GM12878 (cell line): ENCODE measurements at regions of chr1 and their contacts with region 1.

Region 1: GRCh38 chr1:169893494-169894362 is at the start of gene SCYL3:
- DNase-seq: peak; percentile 98
- ATAC-seq: peak; percentile 86
- H3K4me3 ChIP-seq: peak within 1 kb of the TSS; percentile 93
- H3K27ac ChIP-seq: peak within 1 kb of the TSS; percentile 99
- H3K4me1 ChIP-seq: peaks cover 23% of the 10 kb centered on the region
- H3K27me3 ChIP-seq: no peaks in the 10 kb centered on the region
- CTCF ChIP-seq: no peak
- EP300 ChIP-seq: peak; percentile 5 to 39; a peak in 1 of 4 replicates
- POLR2A ChIP-seq: peak; percentile 93
- RAD21 ChIP-seq: no peak
- polyA plus RNA-seq, gene SCYL3: 4.3 to 5.6 TPM

Region 2: GRCh38 chr1:169694304-169695075 is 199.2 kb before region 1 on chr1:
- CTCF ChIA-PET with region 1: no interaction called
- POLR2A ChIA-PET with region 1: no interaction called
- RAD21 ChIA-PET with region 1: no interaction called
- SMC1A ChIA-PET with region 1: interaction called, 3 read pairs
- in situ Hi-C with region 1: no loop called
- intact Hi-C with region 1: loop called (anchors 10 kb)
- DNase-seq: no peak
- ATAC-seq: peak; percentile 51
- H3K4me3 ChIP-seq: no peak overlapping the region
- H3K27ac ChIP-seq: peak overlapping the region; percentile 67; the same call in 1 of the 2 replicates
- H3K4me1 ChIP-seq: peaks cover 80% of the 10 kb centered on the region
- H3K27me3 ChIP-seq: no peaks in the 10 kb centered on the region
- CTCF ChIP-seq: peak in 2 of 3 experiments; percentile 10 to 26; a peak in 2 of 6 replicates
- EP300 ChIP-seq: no peak
- POLR2A ChIP-seq: no peak
- RAD21 ChIP-seq: peak; percentile 42; the same call in 1 of the 2 replicates

Region 3: DNA sequence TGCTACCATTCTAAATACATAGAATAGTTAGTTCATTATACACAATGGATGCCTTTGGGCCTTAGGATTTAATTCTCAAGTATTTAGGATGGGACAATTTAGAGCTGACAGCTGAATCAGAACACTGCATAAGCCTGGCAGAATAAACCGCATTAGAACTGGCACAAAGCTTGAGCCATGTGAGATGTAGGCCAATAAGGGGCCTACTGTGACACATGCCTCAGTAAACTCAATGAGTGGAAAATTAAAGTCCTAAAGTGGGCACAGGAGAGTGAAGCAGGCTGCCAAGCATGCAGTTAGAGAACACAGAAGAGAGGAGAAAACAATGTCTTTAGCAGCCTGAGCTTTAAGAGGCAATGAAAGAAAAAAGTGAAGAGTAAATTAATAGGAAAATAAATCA is 24.3 kb before region 1 on chr1:
- CTCF ChIA-PET with region 1: no interaction called
- POLR2A ChIA-PET with region 1: interaction called, 3 read pairs
- RAD21 ChIA-PET with region 1: no interaction called
- SMC1A ChIA-PET with region 1: interaction called, 13 read pairs
- in situ Hi-C with region 1: no loop called
- intact Hi-C with region 1: no loop called
- DNase-seq: no peak
- ATAC-seq: no peak
- H3K4me3 ChIP-seq: no peak overlapping the region
- H3K27ac ChIP-seq: no peak overlapping the region
- H3K4me1 ChIP-seq: no peaks in the 10 kb centered on the region
- H3K27me3 ChIP-seq: no peaks in the 10 kb centered on the region
- CTCF ChIP-seq: no peak
- EP300 ChIP-seq: no peak
- POLR2A ChIP-seq: no peak
- RAD21 ChIP-seq: no peak

Region 4: GRCh38 chr1:169906938-169907337 is 13.2 kb after region 1 on chr1:
- CTCF ChIA-PET with region 1: interaction called, 6 read pairs
- POLR2A ChIA-PET with region 1: interaction called, 131 read pairs
- RAD21 ChIA-PET with region 1: interaction called, 24 read pairs
- SMC1A ChIA-PET with region 1: interaction called, 65 read pairs
- in situ Hi-C with region 1: no loop called
- intact Hi-C with region 1: no loop called
- DNase-seq: no peak
- ATAC-seq: no peak
- H3K4me3 ChIP-seq: no peak overlapping the region
- H3K27ac ChIP-seq: no peak overlapping the region
- H3K4me1 ChIP-seq: peaks cover 32% of the 10 kb centered on the region
- H3K27me3 ChIP-seq: no peaks in the 10 kb centered on the region
- CTCF ChIP-seq: no peak
- EP300 ChIP-seq: no peak
- POLR2A ChIP-seq: no peak
- RAD21 ChIP-seq: no peak

Region 5: DNA sequence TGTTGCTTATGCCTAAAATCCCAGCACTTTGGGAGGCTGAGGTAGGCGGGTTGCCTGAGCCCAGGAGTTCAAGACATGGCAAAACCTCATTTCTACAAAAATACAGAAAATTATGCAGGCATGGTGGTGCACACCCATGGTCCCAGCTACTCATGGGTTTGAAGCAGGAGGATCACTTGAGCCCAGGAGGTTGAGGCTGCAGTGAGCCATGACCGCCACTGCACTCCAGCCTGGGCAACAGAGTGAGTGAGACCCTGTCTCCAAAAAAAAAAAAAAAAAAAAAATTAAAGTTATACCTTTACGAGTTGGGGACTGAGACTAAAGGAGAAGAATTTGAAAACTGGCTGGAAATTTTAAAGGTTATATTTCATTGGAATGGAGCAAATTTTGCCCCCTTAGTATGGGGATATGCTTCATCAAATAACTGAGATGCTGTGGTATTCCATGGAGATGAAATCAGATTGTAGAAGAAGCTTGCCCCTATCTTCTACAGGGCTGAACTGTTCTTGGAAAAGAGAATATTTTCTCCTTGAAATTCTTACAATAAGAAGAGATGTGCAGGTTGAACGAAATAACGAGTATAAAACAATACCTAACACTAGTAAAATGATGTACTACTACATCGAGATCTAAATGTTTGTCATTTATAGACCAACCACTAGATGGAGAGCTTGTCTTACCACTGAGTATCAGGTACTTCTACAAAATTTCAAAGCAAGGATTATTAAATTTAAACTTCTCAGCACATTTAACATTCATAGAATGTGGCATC is 34.9 kb after region 1 on chr1:
- CTCF ChIA-PET with region 1: interaction called, 7 read pairs
- POLR2A ChIA-PET with region 1: interaction called, 6 read pairs
- RAD21 ChIA-PET with region 1: interaction called, 10 read pairs
- SMC1A ChIA-PET with region 1: interaction called, 165 read pairs
- in situ Hi-C with region 1: no loop called
- intact Hi-C with region 1: loop called (anchors 5 kb)
- DNase-seq: no peak
- ATAC-seq: peak; percentile 82
- H3K4me3 ChIP-seq: no peak overlapping the region
- H3K27ac ChIP-seq: no peak overlapping the region
- H3K4me1 ChIP-seq: peaks cover 6% of the 10 kb centered on the region
- H3K27me3 ChIP-seq: no peaks in the 10 kb centered on the region
- CTCF ChIP-seq: peak; percentile 53 to 73 (median 70)
- EP300 ChIP-seq: no peak
- POLR2A ChIP-seq: no peak
- RAD21 ChIP-seq: peak; percentile 88